GM10248 (cell line): ENCODE measurements at regions of chr6 and their contacts with region 1.

Region 1: DNA sequence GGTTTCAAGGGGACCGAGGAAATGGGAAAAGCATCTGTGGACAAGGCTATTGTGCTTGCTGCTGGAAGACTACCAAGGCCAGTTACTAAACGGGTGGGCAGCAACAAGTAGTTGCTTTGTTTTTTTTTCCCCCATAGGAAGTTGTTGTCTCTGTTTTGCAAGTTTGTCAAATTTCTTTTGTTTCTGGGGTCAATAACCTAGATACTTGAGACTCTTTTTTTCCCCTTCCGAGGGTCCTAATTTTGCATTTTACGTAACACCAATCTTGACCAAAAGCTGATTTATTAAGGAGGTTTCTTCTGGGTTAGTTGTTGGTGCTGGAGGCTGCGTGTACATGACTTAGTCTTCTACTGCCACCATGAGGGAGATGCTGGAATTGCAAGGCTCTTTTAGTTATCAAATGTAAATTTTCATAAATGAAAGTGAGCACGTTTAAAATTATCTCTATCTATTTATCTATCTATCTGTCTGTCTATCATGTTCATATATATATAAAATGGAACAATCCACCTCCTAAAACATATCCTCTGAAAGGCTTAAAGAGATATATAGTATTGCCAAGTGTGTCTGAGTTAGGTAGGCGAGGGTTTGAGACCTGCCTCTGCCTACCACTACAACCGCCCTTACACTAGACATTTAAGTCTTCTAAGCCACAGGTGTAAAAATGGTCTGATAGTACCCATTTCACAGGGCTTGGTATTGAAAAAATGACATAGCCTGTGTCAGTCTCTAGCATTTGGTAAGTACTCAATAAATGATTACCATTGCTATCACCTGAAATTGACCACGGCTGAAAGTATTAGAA is 60.2 kb downstream of the GCLC start:
- DNase-seq: peak; percentile 22
- CTCF ChIP-seq: peak; percentile 87

Region 2: GRCh38 chr6:53313784-53314400 is 170.8 kb before region 1 on chr6:
- CTCF ChIA-PET with region 1: no interaction called
- POLR2A ChIA-PET with region 1: no interaction called
- DNase-seq: no peak
- CTCF ChIP-seq: no peak

Region 3: DNA sequence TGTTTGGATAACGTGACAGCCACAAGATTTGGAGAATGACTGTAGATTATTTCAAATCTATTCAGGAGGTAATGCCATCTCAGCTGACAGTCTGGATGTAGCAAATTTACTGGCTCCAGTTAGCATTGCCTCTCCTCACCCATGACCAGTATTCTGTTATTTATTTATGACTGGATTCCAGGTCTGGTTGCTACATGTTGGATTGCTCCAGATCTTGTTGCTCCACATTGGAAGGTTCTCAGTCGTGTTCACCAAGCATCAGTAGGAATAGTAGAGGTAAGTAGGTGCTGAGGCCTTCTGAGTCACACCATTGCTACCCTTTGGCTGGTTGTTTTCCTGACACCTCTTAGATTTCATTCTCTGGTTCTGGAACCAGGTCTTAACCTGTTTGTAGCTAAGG is 66.4 kb before region 1 on chr6:
- CTCF ChIA-PET with region 1: no interaction called
- POLR2A ChIA-PET with region 1: no interaction called
- DNase-seq: no peak
- CTCF ChIP-seq: no peak

Region 4: DNA sequence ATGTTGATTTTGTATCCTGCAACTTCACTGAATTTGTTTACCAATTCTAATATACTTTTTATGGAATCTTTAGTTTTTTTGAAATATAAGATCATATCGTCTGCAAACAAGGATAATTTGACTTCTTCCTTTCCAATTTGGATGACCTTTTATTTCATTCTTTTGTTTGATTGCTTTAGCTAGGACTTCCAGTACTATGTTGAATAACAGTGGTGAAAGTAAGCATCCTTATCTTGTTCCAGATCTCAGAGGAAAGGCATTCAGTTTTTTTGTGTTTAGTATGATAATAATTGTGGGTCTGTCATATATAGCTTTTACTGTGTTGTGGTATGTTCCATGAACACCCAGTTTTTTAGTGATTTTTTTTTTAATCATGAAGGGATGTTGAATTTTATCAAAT is 15.5 kb before region 1 on chr6:
- CTCF ChIA-PET with region 1: interaction called, 16 read pairs
- POLR2A ChIA-PET with region 1: no interaction called
- DNase-seq: no peak
- CTCF ChIP-seq: no peak